ENCODE measurements at regions of chr1 and their contacts with region 1.

Region 1: DNA sequence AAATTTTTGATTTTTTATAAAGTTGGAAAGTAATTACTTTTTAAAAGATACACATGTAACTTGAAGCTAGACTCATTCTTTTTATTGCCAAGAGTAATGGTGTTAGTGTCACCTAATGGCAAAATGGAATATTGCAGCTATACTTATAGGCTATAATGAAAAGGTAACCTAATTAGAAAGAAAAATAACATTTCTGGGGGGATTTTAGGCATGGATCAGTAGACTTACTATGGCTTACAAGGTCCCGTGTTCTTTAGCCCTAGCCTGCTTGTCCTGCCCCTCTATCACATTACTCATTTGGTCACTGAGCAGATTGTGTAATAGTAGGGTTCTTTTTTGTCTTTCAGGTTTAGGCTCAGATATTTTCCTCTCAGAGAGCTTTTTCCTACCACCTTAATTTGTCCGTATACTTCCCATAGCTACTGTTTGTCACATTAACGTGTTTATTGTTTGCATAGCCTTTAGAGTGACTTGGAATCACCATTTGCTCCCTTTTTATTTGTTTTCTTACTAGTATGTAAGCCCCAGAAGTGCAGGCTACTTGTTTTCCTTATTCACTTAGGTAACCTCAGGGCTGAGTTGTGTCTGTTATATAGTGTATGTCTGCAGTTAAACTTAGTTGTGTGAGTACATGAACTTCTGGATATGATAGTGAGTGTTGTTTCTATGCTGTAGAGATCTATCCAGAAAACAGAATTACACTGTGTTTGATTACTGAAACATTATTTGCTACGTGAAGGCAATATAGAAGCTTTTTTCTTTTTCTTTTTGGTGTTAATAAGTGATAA is 58.7 kb downstream of the RABGAP1L start:
- DNase-seq: no peak
- ATAC-seq: peak; percentile 51
- H3K4me3 Mint-ChIP-seq: no peak overlapping the region
- H3K27ac Mint-ChIP-seq: no peak overlapping the region
- H3K4me1 Mint-ChIP-seq: no peaks in the 10 kb centered on the region
- H3K27me3 Mint-ChIP-seq: no peaks in the 10 kb centered on the region

Region 2: DNA sequence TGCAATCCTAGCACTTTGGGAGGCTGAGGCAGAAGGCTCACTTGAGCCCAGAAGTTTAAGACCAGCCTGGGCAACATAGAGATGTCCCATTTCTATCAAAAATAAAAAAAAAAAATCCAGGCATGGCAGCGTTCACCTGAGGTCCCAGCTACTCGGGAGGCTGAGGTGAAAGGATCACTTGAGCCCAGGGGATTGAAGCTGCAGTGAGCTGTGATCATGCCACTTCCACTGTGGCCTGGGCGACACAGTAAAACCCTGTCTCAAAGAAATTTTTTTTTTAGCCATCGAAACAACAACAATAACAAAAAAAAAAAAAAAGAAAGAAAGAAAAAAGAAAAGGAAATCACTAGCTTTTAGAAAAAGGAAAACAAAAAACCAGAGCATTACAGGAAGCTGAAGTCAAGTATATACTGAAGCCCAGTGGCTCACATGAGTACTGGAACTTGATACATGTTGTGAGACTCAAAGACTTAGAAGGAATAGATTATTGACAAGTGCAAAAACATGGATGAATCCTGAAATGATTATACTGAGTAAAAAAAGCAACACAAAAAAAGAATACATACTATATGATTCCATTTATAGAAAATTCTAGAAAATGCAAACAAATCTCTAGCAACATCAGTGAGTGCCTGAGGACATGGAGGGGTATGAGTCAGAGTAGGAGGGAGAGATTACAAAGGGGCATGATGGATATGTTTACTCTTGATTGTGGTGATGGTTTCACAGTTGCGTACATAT is 64.7 kb before region 1 on chr1:
- CTCF ChIA-PET with region 1: interaction called, 12 read pairs
- POLR2A ChIA-PET with region 1: no interaction called
- DNase-seq: no peak
- ATAC-seq: peak; percentile 59
- H3K4me3 Mint-ChIP-seq: no peak overlapping the region
- H3K27ac Mint-ChIP-seq: peak overlapping the region; percentile 1
- H3K4me1 Mint-ChIP-seq: peaks cover 48% of the 10 kb centered on the region
- H3K27me3 Mint-ChIP-seq: no peaks in the 10 kb centered on the region

Region 3: GRCh38 chr1:174204697-174205308 is 13.2 kb before region 1 on chr1:
- CTCF ChIA-PET with region 1: interaction called, 34 read pairs
- POLR2A ChIA-PET with region 1: no interaction called
- DNase-seq: no peak
- ATAC-seq: peak; percentile 67
- H3K4me3 Mint-ChIP-seq: no peak overlapping the region
- H3K27ac Mint-ChIP-seq: peak overlapping the region; percentile 50
- H3K4me1 Mint-ChIP-seq: peaks cover 35% of the 10 kb centered on the region
- H3K27me3 Mint-ChIP-seq: no peaks in the 10 kb centered on the region